Colonic mucosa (tissue), 4 donors: ENCODE measurements at regions of chr10 and their contacts with region 1.

Region 1: DNA sequence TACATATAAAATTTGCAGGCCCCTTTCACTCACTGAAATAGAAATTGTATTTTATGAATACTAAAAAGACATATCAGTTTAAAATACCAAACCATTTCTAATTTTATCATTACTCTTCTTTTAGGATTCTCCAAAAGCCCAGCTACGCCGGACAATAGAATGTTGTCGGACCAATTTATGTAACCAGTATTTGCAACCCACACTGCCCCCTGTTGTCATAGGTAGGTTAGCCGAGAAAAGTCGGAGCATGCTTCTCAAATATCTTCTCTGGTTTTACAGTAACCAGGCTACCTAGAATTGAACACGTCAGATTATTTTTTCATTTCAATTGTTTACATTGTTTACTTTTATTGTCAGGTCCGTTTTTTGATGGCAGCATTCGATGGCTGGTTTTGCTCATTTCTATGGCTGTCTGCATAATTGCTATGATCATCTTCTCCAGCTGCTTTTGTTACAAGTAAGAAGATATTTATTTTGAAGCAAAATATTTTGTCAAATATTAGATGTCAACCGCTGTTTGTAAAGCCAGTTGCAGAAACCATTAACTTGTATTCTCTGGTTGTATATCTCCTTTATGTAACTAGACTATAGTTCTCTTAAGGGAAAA is 57.6 kb downstream of the MMRN2 start:
- DNase-seq: peak; percentile 84
- H3K4me3 ChIP-seq: no peak overlapping the region
- H3K27ac ChIP-seq: no peak overlapping the region
- H3K4me1 ChIP-seq: no peaks in the 10 kb centered on the region
- H3K27me3 ChIP-seq: no peaks in the 10 kb centered on the region
- CTCF ChIP-seq: peak; percentile 72

Region 2: GRCh38 chr10:86682667-86683066 is 217.1 kb before region 1 on chr10:
- intact Hi-C with region 1: no loop called
- DNase-seq: no peak
- H3K4me3 ChIP-seq: no peak overlapping the region
- H3K27ac ChIP-seq: no peak overlapping the region
- H3K4me1 ChIP-seq: no peaks in the 10 kb centered on the region
- H3K27me3 ChIP-seq: no peaks in the 10 kb centered on the region
- CTCF ChIP-seq: no peak

Region 3: DNA sequence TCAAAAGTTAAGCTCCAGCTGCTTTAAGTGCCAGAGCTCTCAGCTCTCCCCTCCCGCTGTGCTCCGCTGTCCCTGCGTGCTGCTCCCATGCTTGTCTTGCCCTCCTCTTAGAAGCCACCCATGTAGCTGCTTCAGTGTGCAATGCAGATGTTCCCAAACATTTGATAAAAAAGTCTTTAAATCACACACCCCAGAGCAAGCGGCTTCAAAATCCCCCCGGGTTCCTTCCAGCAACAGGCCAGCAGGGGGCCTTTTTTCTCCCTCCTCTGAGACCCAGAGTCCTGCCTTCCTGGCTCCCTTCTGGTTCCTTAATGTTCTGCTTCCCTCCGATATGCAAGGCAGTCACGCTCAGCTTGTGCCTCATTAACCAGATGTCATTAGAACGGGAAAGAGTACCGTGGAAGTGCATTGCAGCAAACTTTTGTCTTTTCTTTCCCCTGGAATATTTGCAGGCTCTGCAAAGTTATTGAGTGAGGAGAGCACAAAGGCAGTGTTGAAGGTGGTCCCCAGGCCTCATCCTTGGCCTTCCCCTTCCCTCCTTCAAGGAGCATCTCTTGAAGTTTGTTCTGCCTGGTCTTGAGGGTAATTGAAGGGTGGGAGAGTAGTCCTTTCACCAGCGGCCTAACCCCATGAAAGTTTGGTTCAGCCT is 205.9 kb before region 1 on chr10:
- intact Hi-C with region 1: loop called (anchors 2 kb)
- DNase-seq: peak; percentile 62
- H3K4me3 ChIP-seq: no peak overlapping the region
- H3K27ac ChIP-seq: no peak overlapping the region
- H3K4me1 ChIP-seq: no peaks in the 10 kb centered on the region
- H3K27me3 ChIP-seq: no peaks in the 10 kb centered on the region
- CTCF ChIP-seq: peak; percentile 63

Region 4: DNA sequence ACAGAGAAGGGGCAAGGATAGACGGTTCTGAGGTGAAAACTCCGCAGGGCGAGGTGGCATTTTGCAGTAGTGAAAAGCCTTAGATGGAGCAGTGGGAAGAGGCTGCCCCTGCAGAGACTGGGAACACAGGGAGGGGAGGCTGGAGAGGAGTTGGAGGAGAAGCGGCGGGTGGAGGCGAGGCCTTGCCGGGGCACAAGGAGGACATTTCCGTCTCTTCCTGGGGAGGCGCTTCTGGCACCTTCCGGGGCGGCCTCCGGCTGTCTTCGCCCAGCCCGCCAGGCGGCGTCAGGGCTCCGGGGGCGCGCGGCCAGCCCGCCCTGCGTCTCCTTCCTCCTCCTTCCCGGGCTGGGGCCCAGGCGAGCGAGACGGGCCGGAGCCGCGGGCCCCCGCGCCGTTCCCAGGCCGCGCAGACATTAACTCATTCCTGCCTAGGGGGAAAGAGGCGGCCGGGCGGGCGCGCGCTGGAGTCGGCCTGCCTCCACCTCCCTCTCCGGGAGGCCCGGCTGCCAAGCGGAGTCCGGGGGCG is 188.7 kb before region 1 on chr10:
- intact Hi-C with region 1: loop called (anchors 2 kb)
- DNase-seq: peak; percentile 90
- H3K4me3 ChIP-seq: peak overlapping the region; percentile 83
- H3K27ac ChIP-seq: peak overlapping the region; percentile 94
- H3K4me1 ChIP-seq: peaks cover 3% of the 10 kb centered on the region
- H3K27me3 ChIP-seq: no peaks in the 10 kb centered on the region
- CTCF ChIP-seq: peak; percentile 71